ENCODE measurements at regions of chr3 and their contacts with region 1.

Region 1: DNA sequence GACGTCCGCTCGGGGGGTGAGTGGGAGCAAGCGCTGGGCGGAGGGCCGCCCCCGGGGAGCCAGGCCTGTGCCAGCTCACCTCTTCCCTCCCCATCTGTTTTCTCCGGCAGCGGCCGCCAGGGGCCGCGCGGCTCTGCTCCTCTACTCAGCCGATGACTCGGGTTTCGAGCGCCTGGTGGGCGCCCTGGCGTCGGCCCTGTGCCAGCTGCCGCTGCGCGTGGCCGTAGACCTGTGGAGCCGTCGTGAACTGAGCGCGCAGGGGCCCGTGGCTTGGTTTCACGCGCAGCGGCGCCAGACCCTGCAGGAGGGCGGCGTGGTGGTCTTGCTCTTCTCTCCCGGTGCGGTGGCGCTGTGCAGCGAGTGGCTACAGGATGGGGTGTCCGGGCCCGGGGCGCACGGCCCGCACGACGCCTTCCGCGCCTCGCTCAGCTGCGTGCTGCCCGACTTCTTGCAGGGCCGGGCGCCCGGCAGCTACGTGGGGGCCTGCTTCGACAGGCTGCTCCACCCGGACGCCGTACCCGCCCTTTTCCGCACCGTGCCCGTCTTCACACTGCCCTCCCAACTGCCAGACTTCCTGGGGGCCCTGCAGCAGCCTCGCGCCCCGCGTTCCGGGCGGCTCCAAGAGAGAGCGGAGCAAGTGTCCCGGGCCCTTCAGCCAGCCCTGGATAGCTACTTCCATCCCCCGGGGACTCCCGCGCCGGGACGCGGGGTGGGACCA is 632 bp upstream of the CRELD1 start:
- DNase-seq: peak; percentile 92
- H3K4me3 Mint-ChIP-seq: peak overlapping the region; percentile 90
- H3K27ac Mint-ChIP-seq: peak overlapping the region; percentile 85
- H3K4me1 Mint-ChIP-seq: peaks cover 28% of the 10 kb centered on the region
- H3K27me3 Mint-ChIP-seq: no peaks in the 10 kb centered on the region

Region 2: GRCh38 chr3:9715764-9716437 is 217.1 kb before region 1 on chr3:
- CTCF ChIA-PET with region 1: interaction called, 3 read pairs
- intact Hi-C with region 1: loop called (anchors 1 kb)
- DNase-seq: peak; percentile 76
- H3K4me3 Mint-ChIP-seq: no peak overlapping the region
- H3K27ac Mint-ChIP-seq: no peak overlapping the region
- H3K4me1 Mint-ChIP-seq: peaks cover 15% of the 10 kb centered on the region
- H3K27me3 Mint-ChIP-seq: no peaks in the 10 kb centered on the region

Region 3: DNA sequence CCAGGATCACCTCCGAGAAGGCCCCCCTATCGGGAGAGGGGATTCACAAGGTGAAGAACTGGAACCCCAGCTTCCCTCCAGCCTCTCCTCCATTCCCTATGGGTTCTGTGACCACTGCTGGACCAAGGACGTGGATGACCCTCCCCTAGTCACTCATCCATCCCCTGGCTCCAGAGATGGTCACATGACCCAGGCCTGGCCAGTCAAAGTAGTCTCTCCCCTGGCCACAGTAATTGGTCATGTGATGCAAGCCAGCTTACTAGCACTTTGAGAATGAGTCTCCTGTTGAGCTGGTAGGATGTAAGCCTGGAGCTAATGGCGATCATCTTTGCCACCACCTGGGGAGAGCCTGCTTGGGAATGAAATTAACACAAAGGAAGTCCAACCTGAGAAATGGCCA is 167.1 kb before region 1 on chr3:
- CTCF ChIA-PET with region 1: no interaction called
- intact Hi-C with region 1: no loop called
- DNase-seq: no peak
- H3K4me3 Mint-ChIP-seq: no peak overlapping the region
- H3K27ac Mint-ChIP-seq: no peak overlapping the region
- H3K4me1 Mint-ChIP-seq: peaks cover 14% of the 10 kb centered on the region
- H3K27me3 Mint-ChIP-seq: no peaks in the 10 kb centered on the region

Region 4: DNA sequence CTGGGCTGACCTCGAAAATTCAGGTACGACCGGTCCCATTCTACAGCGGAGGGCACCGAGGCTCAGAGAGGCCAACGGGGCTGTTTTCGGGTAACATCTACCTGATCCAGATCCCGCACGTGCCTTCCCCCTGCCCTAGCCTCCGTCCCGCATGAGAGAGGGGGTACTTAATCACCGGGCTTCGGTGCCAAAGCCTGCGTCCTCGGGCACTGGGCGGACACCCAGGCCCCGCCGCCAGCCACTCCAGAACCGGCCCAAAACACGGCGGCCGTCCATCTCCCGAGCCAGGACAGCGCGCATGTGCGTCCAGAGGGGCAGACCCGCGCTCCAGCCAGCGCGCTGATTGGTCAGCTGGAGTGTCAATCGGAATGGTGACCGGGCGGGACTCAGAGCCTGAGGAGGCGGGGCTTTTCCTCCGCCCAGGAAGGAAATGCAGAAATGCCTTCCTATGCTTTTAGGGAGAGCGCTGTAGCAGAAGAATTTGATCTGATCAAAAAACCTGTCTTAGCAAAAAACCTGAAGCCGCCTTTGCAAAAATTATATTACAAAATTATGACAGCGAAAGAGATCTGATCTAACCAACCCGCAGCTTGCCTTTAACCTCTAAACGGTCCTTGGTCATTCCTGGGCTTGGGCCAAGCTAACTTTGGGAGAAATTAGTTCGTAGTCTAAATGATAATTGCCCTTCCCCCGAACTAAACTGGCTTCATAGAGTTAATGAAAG is 89.1 kb before region 1 on chr3 and contains the start of gene RPUSD3:
- CTCF ChIA-PET with region 1: interaction called, 15 read pairs
- intact Hi-C with region 1: loop called (anchors 1 kb)
- DNase-seq: peak; percentile 98
- H3K4me3 Mint-ChIP-seq: peak within 1 kb of the TSS; percentile 98
- H3K27ac Mint-ChIP-seq: peak within 1 kb of the TSS; percentile 89
- H3K4me1 Mint-ChIP-seq: peaks cover 30% of the 10 kb centered on the region
- H3K27me3 Mint-ChIP-seq: no peaks in the 10 kb centered on the region
- total RNA-seq, gene RPUSD3: 82.0 to 83.7 TPM

Region 5: GRCh38 chr3:9951962-9952805 is 19.2 kb after region 1 on chr3 and contains the start of gene PRRT3:
- CTCF ChIA-PET with region 1: interaction called, 18 read pairs
- intact Hi-C with region 1: loop called (anchors 1 kb)
- DNase-seq: peak; percentile 77
- H3K4me3 Mint-ChIP-seq: peak within 1 kb of the TSS; percentile 81
- H3K27ac Mint-ChIP-seq: peak within 1 kb of the TSS; percentile 86
- H3K4me1 Mint-ChIP-seq: peaks cover 16% of the 10 kb centered on the region
- H3K27me3 Mint-ChIP-seq: no peaks in the 10 kb centered on the region
- total RNA-seq, gene PRRT3: 5.8 to 6.7 TPM

Region 6: DNA sequence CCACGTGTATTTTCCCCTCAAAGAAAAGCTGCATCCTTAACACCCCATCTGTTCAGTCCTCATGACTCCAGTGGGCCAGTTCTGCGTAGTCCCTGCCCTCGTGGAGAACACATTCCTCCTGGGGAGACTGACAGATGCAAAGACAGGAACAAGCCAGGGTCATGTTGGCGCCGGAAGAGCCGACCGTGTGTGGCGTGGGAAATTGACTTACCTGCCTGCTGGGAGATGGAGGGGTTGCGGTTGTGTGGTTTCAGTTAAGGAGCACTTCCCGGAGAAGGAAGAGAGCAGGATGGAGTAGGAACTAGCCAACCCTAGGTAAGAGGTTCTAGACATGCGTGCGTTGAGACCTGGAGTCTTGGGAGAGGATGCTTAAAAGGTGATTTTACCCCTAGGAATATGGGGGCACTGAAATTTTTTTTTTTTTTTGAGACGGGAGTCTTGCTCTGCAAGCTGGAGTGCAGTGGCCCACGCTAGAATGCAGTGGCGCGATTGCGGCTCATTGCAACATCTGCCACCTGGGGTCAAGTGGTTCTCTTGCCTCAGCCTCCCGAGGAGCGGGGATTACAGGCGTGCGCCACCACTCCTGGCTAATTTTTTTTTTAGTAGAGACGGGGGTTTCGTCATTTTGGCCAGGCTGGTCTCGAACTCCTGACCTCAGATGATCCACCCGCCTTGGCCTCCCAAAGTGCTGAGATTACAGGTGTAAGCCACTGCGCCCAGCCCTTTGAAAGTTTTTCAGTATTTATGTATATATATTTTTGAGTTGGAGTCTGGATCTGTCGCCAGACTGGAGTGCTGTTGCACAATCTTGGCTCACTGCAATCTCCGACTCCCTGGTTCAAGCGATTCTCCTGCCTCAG is 209.9 kb after region 1 on chr3:
- CTCF ChIA-PET with region 1: no interaction called
- intact Hi-C with region 1: loop called (anchors 1 kb)
- DNase-seq: peak; percentile 48
- H3K4me3 Mint-ChIP-seq: peak overlapping the region; percentile 84
- H3K27ac Mint-ChIP-seq: peak overlapping the region; percentile 87
- H3K4me1 Mint-ChIP-seq: peaks cover 32% of the 10 kb centered on the region
- H3K27me3 Mint-ChIP-seq: no peaks in the 10 kb centered on the region